ENCODE measurements at regions of chr15 and their contacts with region 1.

Region 1: DNA sequence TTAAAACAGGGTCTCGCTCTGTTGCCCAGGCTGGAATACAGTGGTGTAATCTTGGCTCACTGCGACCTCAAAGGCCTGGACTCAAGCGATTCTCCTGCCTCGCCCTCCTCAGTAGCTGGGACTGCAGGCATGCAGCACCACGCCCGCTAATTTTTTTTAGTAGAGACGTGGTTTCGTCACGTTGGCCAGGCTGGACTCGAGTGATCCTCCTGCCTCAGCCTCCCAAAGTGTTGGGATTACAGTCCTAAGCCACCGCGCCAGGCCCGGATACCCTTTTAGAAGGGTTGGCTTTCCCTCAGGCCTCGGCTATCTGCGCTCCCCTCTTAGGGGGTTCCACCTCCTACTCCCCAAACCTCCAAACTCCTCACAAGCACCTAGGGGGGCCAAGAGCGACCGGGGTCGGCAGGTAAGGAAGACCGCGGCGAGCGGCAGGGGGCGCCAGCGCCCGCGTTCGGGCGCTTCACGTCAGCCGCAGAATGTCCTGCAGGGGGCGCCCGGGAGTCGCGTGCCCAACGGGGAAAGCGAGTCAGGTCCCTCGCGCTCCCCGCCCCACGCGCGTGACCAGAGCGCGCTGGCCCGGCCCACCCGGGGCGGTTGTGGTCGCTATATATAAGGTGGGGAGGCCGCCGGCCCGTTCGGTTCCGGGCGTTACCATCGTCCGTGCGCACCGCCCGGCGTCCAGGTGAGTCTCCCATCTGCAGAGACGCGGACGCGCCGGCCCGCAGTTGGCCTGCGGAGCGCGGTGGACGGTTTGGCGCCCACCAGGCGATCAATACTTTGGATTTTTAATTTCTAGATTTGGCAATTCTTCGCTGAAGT is 51.8 kb upstream of the GATM start:
- DNase-seq: no peak
- H3K4me3 ChIP-seq: peak overlapping the region; percentile 59
- CTCF ChIP-seq: peak; percentile 98

Region 2: GRCh38 chr15:45166834-45167630 is 263.2 kb before region 1 on chr15:
- CTCF ChIA-PET with region 1: interaction called, 13 read pairs
- POLR2A ChIA-PET with region 1: interaction called, 3 read pairs
- DNase-seq: peak; percentile 34
- H3K4me3 ChIP-seq: peak overlapping the region; percentile 60
- CTCF ChIP-seq: peak; percentile 77

Region 3: DNA sequence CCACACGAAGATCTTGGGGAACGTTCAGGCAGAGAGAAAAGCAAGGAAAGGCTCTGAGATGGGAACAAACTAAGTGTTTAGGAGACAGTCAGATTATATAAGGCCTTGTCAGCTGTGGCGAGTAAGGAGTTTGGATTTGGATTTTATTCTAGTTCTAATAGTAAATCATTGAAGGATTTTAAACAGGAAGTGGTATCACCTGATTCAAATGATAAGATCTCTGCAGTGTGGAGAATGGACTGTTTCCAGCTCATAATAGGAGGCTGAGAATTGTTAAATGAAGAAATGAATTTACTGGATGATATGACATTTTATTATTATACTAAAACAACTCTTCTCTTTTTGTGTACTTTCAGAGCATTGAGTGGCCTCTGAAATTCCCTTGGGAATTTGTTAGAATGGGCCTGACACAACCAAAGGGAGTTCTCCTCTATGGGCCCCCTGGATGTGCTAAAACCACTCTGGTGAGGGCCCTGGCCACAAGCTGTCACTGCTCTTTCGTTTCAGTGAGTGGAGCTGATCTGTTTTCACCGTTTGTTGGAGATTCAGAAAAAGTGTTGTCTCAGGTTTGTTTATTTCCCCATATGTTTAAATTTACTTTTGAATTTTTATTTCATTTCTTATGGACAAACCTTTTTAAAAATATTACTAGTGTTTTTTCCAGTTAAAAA is 15.8 kb before region 1 on chr15:
- CTCF ChIA-PET with region 1: interaction called, 85 read pairs
- POLR2A ChIA-PET with region 1: no interaction called
- DNase-seq: no peak
- H3K4me3 ChIP-seq: no peak overlapping the region
- CTCF ChIP-seq: no peak

Region 4: DNA sequence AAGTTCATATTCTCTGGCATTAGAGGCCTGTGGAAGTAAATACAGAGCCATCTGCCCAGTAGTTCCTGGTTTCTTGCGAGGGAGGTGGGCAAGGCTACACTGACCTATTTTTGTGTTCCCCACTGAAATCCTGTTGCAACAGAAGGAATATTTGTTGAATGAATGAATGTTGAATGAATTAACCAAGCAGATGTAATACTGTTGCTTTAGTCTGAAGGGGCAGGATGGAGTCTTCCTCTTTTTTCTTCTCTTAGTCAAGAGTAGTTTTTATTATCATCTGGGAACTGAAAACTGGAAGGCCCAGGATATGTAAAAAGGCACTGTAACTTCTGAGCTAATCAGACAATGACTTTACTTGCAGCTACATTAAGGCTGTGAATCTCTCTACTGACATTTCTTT is 174.1 kb after region 1 on chr15:
- CTCF ChIA-PET with region 1: interaction called, 12 read pairs
- POLR2A ChIA-PET with region 1: no interaction called
- DNase-seq: no peak
- H3K4me3 ChIP-seq: no peak overlapping the region
- CTCF ChIP-seq: no peak

Region 5: GRCh38 chr15:45618813-45619212 is 188.6 kb after region 1 on chr15:
- CTCF ChIA-PET with region 1: interaction called, 113 read pairs
- POLR2A ChIA-PET with region 1: no interaction called
- DNase-seq: no peak
- H3K4me3 ChIP-seq: no peak overlapping the region
- CTCF ChIP-seq: no peak

Measured in AG04449 (cell line).